CD4-positive, alpha-beta memory T cell (primary cell): ENCODE measurements at regions of chr9 and their contacts with region 1.

Region 1: GRCh38 chr9:32589083-32589723 is 16.2 kb upstream of the NDUFB6 start:
- DNase-seq: peak in 1 of 5 donors; percentile 25
- H3K4me3 ChIP-seq: no peak overlapping the region
- H3K4me3 Mint-ChIP-seq: no peak overlapping the region
- H3K27ac ChIP-seq: no peak overlapping the region
- H3K27ac Mint-ChIP-seq: no peak overlapping the region
- H3K4me1 ChIP-seq: no peaks in the 10 kb centered on the region
- H3K4me1 Mint-ChIP-seq: no peaks in the 10 kb centered on the region
- H3K27me3 ChIP-seq: no peaks in the 10 kb centered on the region
- H3K27me3 Mint-ChIP-seq: peaks cover 19% of the 10 kb centered on the region in 2 donors

Region 2: DNA sequence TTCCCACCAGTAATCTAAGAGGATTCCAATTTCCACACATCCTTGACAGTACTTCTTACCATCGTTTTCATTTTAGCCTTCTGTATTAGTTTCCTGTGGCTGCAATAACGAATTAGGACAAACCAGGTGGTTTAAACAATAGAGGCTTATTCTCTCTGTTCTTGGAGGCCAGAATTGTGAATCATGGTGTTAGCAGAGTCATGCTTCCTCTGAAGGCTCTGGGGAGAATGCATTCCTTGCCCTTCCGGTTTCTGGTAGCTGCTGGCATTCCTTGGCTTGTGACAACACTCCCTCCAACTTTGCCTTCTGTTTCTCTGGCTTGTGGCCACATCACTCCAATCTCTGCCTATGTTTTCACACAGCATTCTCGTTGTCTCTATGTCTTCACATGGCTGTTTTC is 86.7 kb before region 1 on chr9:
- CTCF ChIA-PET with region 1: no interaction called
- POLR2A ChIA-PET with region 1: no interaction called
- intact Hi-C with region 1: no loop called
- DNase-seq: no peak
- H3K4me3 ChIP-seq: no peak overlapping the region
- H3K4me3 Mint-ChIP-seq: no peak overlapping the region
- H3K27ac ChIP-seq: no peak overlapping the region
- H3K27ac Mint-ChIP-seq: peak overlapping the region in 6 of 7 donors; percentile 17 to 82 (median 54)
- H3K4me1 ChIP-seq: no peaks in the 10 kb centered on the region
- H3K4me1 Mint-ChIP-seq: peaks cover 3 to 16% (median 7%) of the 10 kb centered on the region in 4 donors
- H3K27me3 ChIP-seq: no peaks in the 10 kb centered on the region
- H3K27me3 Mint-ChIP-seq: no peaks in the 10 kb centered on the region

Region 3: GRCh38 chr9:32543047-32543446 is 46.2 kb before region 1 on chr9:
- CTCF ChIA-PET with region 1: no interaction called
- POLR2A ChIA-PET with region 1: no interaction called
- intact Hi-C with region 1: no loop called
- DNase-seq: no peak
- H3K4me3 ChIP-seq: no peak overlapping the region
- H3K4me3 Mint-ChIP-seq: no peak overlapping the region
- H3K27ac ChIP-seq: no peak overlapping the region
- H3K27ac Mint-ChIP-seq: peak overlapping the region in 1 of 7 donors; percentile 5
- H3K4me1 ChIP-seq: peaks cover 11% of the 10 kb centered on the region
- H3K4me1 Mint-ChIP-seq: peaks cover 7 to 23% (median 17%) of the 10 kb centered on the region in 4 donors
- H3K27me3 ChIP-seq: no peaks in the 10 kb centered on the region
- H3K27me3 Mint-ChIP-seq: no peaks in the 10 kb centered on the region

Region 4: GRCh38 chr9:32968101-32969011 is 379.2 kb after region 1 on chr9:
- CTCF ChIA-PET with region 1: interaction called, 11 read pairs
- POLR2A ChIA-PET with region 1: no interaction called
- intact Hi-C with region 1: loop called (anchors 2 kb)
- DNase-seq: peak in 4 of 5 donors; percentile 28 to 53 (median 38)
- H3K4me3 ChIP-seq: no peak overlapping the region
- H3K4me3 Mint-ChIP-seq: no peak overlapping the region
- H3K27ac ChIP-seq: no peak overlapping the region
- H3K27ac Mint-ChIP-seq: peak overlapping the region in 1 of 7 donors; percentile 65
- H3K4me1 ChIP-seq: no peaks in the 10 kb centered on the region
- H3K4me1 Mint-ChIP-seq: peaks cover 2 to 4% (median 3%) of the 10 kb centered on the region in 4 donors
- H3K27me3 ChIP-seq: no peaks in the 10 kb centered on the region
- H3K27me3 Mint-ChIP-seq: no peaks in the 10 kb centered on the region